ENCODE measurements at regions of chr11 and their contacts with region 1.

Region 1: GRCh38 chr11:63671322-63672155 is at the start of gene ATL3:
- DNase-seq: peak; percentile 96
- ATAC-seq: peak; percentile 86
- H3K4me3 Mint-ChIP-seq: peak within 1 kb of the TSS; percentile 85
- H3K27ac Mint-ChIP-seq: peak within 1 kb of the TSS; percentile 90
- H3K4me1 Mint-ChIP-seq: peaks cover 45% of the 10 kb centered on the region
- H3K27me3 Mint-ChIP-seq: no peaks in the 10 kb centered on the region
- total RNA-seq, gene ATL3: 18.9 to 25.7 TPM

Region 2: DNA sequence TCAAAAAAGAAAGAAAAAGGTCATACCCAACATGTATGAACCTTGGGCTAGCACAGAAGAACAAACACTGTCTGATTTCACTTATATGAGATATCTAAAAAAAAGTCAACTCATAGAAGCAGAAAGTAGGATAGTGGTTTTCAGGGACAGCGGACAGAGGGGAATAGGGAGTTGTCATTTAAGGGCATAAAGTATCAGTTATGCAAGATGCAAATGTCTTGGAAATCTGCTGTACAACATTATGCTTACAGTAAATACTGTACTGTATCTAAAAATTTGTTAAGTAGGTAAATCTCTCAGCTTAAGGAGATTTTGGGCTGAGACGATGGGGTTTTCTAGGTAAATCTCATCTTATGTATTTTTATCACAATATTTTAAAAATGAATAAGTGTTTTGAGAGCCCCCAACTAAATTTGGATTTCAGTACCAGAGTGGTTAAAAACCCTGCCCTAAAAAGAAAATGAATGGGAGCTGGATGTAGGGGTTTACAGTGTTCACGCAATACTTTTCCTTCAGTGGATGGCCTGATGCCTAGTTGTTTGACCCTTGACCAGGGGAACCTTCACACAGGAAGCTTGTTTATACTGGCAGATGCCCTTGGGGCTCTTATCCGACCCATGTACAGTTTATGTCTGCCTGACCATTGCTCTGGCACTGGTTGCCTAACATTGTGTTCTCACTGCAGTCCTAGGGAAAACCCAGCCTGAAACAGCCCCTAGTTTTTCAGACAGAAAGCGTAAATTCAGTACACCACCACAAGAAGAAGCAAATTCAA is 267.2 kb before region 1 on chr11:
- CTCF ChIA-PET with region 1: no interaction called
- POLR2A ChIA-PET with region 1: no interaction called
- intact Hi-C with region 1: no loop called
- DNase-seq: no peak
- ATAC-seq: no peak
- H3K4me3 Mint-ChIP-seq: no peak overlapping the region
- H3K27ac Mint-ChIP-seq: no peak overlapping the region
- H3K4me1 Mint-ChIP-seq: no peaks in the 10 kb centered on the region
- H3K27me3 Mint-ChIP-seq: peaks cover 16% of the 10 kb centered on the region

Region 3: DNA sequence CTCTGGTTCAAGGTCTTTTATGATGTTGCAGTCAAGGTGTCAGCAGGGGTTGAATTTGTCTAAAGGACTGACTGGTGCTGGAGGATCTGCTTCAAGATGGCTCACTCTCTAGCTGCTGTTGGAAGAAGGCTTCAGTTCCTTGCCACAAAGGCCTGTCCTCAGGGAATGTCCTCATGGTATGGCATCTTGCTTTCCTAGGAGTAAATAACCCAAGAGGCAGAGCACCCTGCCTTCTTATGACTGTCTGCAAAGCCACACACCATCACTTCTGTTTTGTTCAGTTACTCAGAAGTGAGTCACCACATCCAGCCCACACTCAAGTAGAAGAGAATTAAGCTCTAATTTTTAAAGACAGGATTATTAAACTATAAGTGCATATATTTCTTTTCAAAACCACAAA is 225.8 kb before region 1 on chr11:
- CTCF ChIA-PET with region 1: no interaction called
- POLR2A ChIA-PET with region 1: no interaction called
- intact Hi-C with region 1: loop called in 1 of 2 experiments (anchors 1 kb)
- DNase-seq: peak; percentile 45
- ATAC-seq: peak; percentile 61
- H3K4me3 Mint-ChIP-seq: no peak overlapping the region
- H3K27ac Mint-ChIP-seq: no peak overlapping the region
- H3K4me1 Mint-ChIP-seq: peaks cover 35% of the 10 kb centered on the region
- H3K27me3 Mint-ChIP-seq: peaks cover 7% of the 10 kb centered on the region

Region 4: GRCh38 chr11:63472388-63472787 is 199.2 kb before region 1 on chr11:
- CTCF ChIA-PET with region 1: no interaction called
- POLR2A ChIA-PET with region 1: no interaction called
- intact Hi-C with region 1: no loop called
- DNase-seq: no peak
- ATAC-seq: no peak
- H3K4me3 Mint-ChIP-seq: no peak overlapping the region
- H3K27ac Mint-ChIP-seq: no peak overlapping the region
- H3K4me1 Mint-ChIP-seq: no peaks in the 10 kb centered on the region
- H3K27me3 Mint-ChIP-seq: peaks cover 4% of the 10 kb centered on the region

Region 5: GRCh38 chr11:63629426-63629825 is 42.1 kb before region 1 on chr11:
- CTCF ChIA-PET with region 1: no interaction called
- POLR2A ChIA-PET with region 1: no interaction called
- intact Hi-C with region 1: no loop called
- DNase-seq: no peak
- ATAC-seq: no peak
- H3K4me3 Mint-ChIP-seq: no peak overlapping the region
- H3K27ac Mint-ChIP-seq: no peak overlapping the region
- H3K4me1 Mint-ChIP-seq: peaks cover 15% of the 10 kb centered on the region
- H3K27me3 Mint-ChIP-seq: no peaks in the 10 kb centered on the region

Measured in activated CD4-positive, alpha-beta T cell treated with anti-CD3 and anti-CD28 coated beads for 36 hours (primary cell).